ENCODE measurements at regions of chr5 and their contacts with region 1.

Region 1: GRCh38 chr5:97162045-97162444 is 19.6 kb upstream of the LIX1 start:
- DNase-seq: peak; percentile 74
- H3K4me3 Mint-ChIP-seq: no peak overlapping the region
- H3K27ac Mint-ChIP-seq: no peak overlapping the region
- H3K4me1 Mint-ChIP-seq: peaks cover 21% of the 10 kb centered on the region
- H3K27me3 Mint-ChIP-seq: no peaks in the 10 kb centered on the region
- CTCF ChIP-seq: peak; percentile 92

Region 2: GRCh38 chr5:96752341-96753016 is 409.6 kb before region 1 on chr5:
- CTCF ChIA-PET with region 1: interaction called, 4 read pairs
- intact Hi-C with region 1: loop called (anchors 5 kb)
- DNase-seq: peak; percentile 65
- H3K4me3 Mint-ChIP-seq: no peak overlapping the region
- H3K27ac Mint-ChIP-seq: no peak overlapping the region
- H3K4me1 Mint-ChIP-seq: peaks cover 18% of the 10 kb centered on the region
- H3K27me3 Mint-ChIP-seq: no peaks in the 10 kb centered on the region
- CTCF ChIP-seq: peak; percentile 32

Region 3: GRCh38 chr5:96855031-96855872 is 306.8 kb before region 1 on chr5:
- CTCF ChIA-PET with region 1: no interaction called
- intact Hi-C with region 1: no loop called
- DNase-seq: no peak
- H3K4me3 Mint-ChIP-seq: no peak overlapping the region
- H3K27ac Mint-ChIP-seq: no peak overlapping the region
- H3K4me1 Mint-ChIP-seq: no peaks in the 10 kb centered on the region
- H3K27me3 Mint-ChIP-seq: no peaks in the 10 kb centered on the region
- CTCF ChIP-seq: no peak

Region 4: GRCh38 chr5:96868603-96869371 is 293.3 kb before region 1 on chr5:
- CTCF ChIA-PET with region 1: interaction called, 6 read pairs
- intact Hi-C with region 1: loop called (anchors 1 kb)
- DNase-seq: peak; percentile 40
- H3K4me3 Mint-ChIP-seq: no peak overlapping the region
- H3K27ac Mint-ChIP-seq: no peak overlapping the region
- H3K4me1 Mint-ChIP-seq: peaks cover 6% of the 10 kb centered on the region
- H3K27me3 Mint-ChIP-seq: no peaks in the 10 kb centered on the region
- CTCF ChIP-seq: peak; percentile 85

Region 5: DNA sequence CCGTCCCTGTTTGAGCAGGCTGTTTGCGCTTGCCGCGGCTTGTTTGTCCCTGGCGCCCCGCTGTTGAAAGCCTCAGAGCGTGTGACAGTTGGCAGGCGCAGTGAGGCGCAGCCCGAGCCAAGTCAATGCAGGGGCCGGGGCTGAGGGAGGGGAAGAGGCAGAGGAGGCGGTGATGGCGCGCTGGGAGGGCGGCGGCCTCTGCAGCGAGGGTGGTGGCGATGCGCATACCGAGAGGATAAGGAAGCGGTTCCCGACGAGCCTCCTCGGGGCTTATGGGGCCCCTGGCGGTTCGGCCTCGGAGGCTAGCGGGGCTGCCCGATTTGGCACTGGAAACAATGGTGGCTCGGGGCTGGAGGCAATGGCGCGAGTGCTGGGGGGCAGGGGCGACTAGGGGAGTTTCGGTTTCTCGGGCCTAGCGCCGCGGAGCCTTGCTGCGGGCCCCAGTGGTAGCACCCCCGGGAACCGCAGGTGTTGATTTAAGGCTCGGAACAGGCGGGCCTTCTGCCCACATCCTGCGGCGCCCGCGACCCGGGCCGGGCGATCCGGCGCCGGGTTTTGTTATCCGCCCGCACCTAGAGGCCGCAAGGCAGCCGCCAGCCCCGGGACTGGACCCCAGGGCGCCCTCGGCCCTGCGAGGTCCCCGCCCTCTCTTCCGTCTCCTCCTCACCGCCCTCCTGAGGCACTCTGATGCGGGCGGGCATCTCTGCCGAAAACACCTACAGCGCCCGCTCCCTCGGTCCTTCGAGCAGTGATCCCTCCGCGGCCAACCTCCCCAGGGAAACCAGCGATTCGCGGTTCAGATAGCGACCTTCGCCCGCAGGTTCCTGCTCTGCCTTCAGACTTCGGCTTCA is 227.1 kb before region 1 on chr5:
- CTCF ChIA-PET with region 1: no interaction called
- intact Hi-C with region 1: loop called (anchors 5 kb)
- DNase-seq: peak; percentile 98
- H3K4me3 Mint-ChIP-seq: peak overlapping the region; percentile 78
- H3K27ac Mint-ChIP-seq: peak overlapping the region; percentile 93
- H3K4me1 Mint-ChIP-seq: peaks cover 42% of the 10 kb centered on the region
- H3K27me3 Mint-ChIP-seq: no peaks in the 10 kb centered on the region
- CTCF ChIP-seq: no peak

Region 6: GRCh38 chr5:97044052-97044451 is 118.0 kb before region 1 on chr5:
- CTCF ChIA-PET with region 1: no interaction called
- intact Hi-C with region 1: loop called (anchors 5 kb)
- DNase-seq: peak; percentile 39
- H3K4me3 Mint-ChIP-seq: no peak overlapping the region
- H3K27ac Mint-ChIP-seq: no peak overlapping the region
- H3K4me1 Mint-ChIP-seq: peaks cover 26% of the 10 kb centered on the region
- H3K27me3 Mint-ChIP-seq: no peaks in the 10 kb centered on the region
- CTCF ChIP-seq: no peak

Region 7: DNA sequence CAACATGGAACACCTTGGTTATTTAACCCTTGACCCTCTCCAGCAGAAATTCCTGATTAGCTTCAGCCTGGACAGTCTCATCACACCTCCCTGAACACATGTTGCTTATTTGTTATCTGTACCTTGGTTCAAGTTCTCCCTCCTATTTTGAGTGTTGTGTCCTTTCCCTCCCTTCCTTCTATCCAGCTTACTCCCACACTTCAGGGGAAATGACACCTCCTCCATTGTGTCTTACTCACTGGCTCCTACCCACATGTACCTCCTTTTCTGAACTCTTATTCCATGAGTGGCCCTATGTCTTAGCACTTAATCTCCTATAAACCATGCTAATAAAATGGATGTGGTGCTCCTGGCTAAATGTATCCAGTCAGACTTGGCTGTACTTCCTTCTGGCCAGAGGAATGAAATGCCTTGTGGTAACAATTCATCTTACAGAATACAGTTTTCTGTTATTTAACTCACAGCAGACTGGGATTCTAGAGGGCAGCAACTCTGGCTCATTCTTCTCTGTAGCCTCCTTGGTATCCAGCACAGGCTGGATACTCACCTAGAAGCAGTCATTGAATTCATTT is 30.8 kb before region 1 on chr5:
- CTCF ChIA-PET with region 1: no interaction called
- intact Hi-C with region 1: no loop called
- DNase-seq: no peak
- H3K4me3 Mint-ChIP-seq: no peak overlapping the region
- H3K27ac Mint-ChIP-seq: no peak overlapping the region
- H3K4me1 Mint-ChIP-seq: no peaks in the 10 kb centered on the region
- H3K27me3 Mint-ChIP-seq: peaks cover 39% of the 10 kb centered on the region
- CTCF ChIP-seq: no peak